ENCODE measurements at regions of chr19 and their contacts with region 1.

Region 1: GRCh38 chr19:38485541-38486285 is 52.2 kb downstream of the RYR1 start:
- DNase-seq: no peak
- ATAC-seq: no peak
- H3K4me3 ChIP-seq: no peak overlapping the region
- H3K4me3 Mint-ChIP-seq: no peak overlapping the region
- H3K27ac ChIP-seq: no peak overlapping the region
- H3K27ac Mint-ChIP-seq: no peak overlapping the region
- H3K4me1 ChIP-seq: no peaks in the 10 kb centered on the region
- H3K4me1 Mint-ChIP-seq: no peaks in the 10 kb centered on the region
- H3K27me3 ChIP-seq: peaks cover 0 to 2% of the 10 kb centered on the region in 2 experiments
- H3K27me3 Mint-ChIP-seq: peaks cover 12% of the 10 kb centered on the region
- CTCF ChIP-seq: no peak

Region 2: DNA sequence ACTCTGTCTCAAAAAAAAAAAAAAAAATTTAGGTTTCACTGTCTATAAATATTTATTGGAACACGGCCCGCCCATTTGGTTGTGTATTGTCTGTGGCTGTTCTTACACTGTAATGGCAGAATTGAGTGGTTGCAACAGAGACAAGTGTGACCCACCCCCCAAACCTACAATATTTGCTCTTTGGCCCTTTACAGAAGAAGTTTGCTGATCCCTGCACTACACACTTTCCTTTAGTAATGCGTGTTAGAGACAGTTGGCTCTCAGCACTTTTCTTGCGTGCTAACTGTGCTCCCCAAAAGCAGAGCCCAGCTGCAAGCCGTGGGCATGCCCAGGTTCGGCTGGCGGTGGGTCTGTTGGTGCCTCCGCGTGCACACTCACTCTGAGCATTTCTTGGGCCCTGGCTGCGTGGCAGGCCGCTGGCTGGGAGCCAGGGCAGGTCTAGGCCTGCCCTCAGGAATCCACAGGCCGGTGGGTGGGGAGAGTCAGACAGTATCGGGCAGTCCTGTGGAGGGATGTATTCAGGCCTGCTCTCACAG is 506.1 kb before region 1 on chr19:
- CTCF ChIA-PET with region 1: no interaction called
- POLR2A ChIA-PET with region 1: no interaction called
- intact Hi-C with region 1: no loop called
- DNase-seq: no peak
- ATAC-seq: no peak
- H3K4me3 ChIP-seq: no peak overlapping the region
- H3K4me3 Mint-ChIP-seq: no peak overlapping the region
- H3K27ac ChIP-seq: no peak overlapping the region
- H3K27ac Mint-ChIP-seq: no peak overlapping the region
- H3K4me1 ChIP-seq: no peaks in the 10 kb centered on the region
- H3K4me1 Mint-ChIP-seq: peaks cover 4% of the 10 kb centered on the region
- H3K27me3 ChIP-seq: no peaks in the 10 kb centered on the region
- H3K27me3 Mint-ChIP-seq: no peaks in the 10 kb centered on the region
- CTCF ChIP-seq: no peak

Region 3: DNA sequence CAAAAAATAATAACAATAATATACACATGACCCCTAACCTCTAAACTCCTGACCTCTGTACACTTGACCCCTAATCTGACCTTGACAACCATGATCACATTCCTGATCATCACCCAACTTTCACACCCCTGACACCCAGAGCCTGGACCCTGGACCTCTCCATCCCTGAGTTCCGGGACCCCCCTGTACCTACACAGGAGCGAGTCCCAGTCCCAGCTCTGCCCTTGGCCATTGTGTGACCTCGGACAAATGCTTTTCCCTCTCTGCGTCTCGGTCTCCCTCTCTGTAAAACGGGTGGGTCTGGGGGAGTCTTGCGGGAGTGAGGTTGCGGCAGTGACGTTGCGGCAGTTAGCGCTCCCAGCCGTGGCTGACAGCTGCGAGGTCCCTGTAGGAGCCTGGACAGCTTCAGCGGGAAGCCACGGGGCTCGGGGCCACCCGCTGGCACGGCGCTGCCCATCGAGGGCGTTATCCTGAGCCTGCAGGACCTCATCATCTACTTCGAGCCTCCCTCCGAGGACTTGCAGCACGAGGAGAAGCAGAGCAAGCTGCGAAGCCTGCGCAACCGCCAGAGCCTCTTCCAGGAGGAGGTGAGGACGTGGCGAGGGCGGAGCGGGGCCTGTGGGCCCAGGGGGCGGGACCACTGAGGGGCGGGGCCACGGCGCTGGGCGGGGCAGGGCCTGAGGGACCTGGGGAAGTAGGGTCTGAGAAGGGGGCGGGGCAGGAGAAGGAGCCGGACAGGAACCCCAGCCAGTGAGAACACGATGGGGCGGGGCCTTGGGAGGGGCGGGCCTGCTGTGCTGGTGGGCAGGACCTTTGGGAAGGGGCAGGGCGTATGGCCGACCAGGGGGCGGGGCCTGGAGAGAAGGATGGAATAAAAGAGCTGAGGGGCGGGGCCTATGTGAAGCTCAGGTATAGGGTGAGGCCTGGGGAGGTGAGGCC is 33.0 kb before region 1 on chr19:
- CTCF ChIA-PET with region 1: no interaction called
- POLR2A ChIA-PET with region 1: no interaction called
- intact Hi-C with region 1: no loop called
- DNase-seq: peak in 1 of 14 experiments; percentile 34
- ATAC-seq: no peak
- H3K4me3 ChIP-seq: no peak overlapping the region
- H3K4me3 Mint-ChIP-seq: no peak overlapping the region
- H3K27ac ChIP-seq: no peak overlapping the region
- H3K27ac Mint-ChIP-seq: no peak overlapping the region
- H3K4me1 ChIP-seq: no peaks in the 10 kb centered on the region
- H3K4me1 Mint-ChIP-seq: no peaks in the 10 kb centered on the region
- H3K27me3 ChIP-seq: no peaks in the 10 kb centered on the region
- H3K27me3 Mint-ChIP-seq: peaks cover 5% of the 10 kb centered on the region
- CTCF ChIP-seq: no peak

Region 4: DNA sequence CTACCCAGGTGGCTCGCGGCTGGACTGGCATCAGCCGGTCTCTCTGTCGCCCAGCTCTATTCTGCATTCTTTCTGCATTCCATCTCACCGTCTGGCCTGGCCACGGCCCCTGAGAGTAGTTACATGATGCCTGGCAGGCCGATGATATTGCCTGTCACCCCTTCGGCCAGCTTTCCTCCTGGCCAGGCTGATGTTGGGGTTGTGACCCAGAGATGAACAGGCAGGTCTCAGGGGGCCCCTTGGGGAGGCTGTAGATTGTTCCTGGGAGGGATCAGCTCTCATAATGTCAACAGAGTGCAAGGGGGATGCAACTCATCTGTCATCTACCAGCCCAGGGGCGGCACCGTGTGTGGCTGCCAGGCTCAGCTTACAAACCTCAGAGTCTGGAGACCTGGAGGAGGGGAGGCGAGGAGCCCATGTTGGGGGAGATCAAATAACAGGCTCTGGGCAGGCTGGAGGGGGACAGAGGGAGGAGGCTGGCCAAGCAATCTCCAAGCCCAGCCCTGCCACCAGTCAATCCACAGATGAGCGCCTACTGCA is 503.4 kb after region 1 on chr19:
- CTCF ChIA-PET with region 1: no interaction called
- POLR2A ChIA-PET with region 1: no interaction called
- intact Hi-C with region 1: loop called in 1 of 2 experiments (anchors 5 kb)
- DNase-seq: no peak
- ATAC-seq: no peak
- H3K4me3 ChIP-seq: no peak overlapping the region
- H3K4me3 Mint-ChIP-seq: no peak overlapping the region
- H3K27ac ChIP-seq: no peak overlapping the region
- H3K27ac Mint-ChIP-seq: no peak overlapping the region
- H3K4me1 ChIP-seq: no peaks in the 10 kb centered on the region
- H3K4me1 Mint-ChIP-seq: no peaks in the 10 kb centered on the region
- H3K27me3 ChIP-seq: no peaks in the 10 kb centered on the region
- H3K27me3 Mint-ChIP-seq: peaks cover 45% of the 10 kb centered on the region
- CTCF ChIP-seq: no peak